ENCODE measurements at regions of chr5 and their contacts with region 1.

Region 1: GRCh38 chr5:139670369-139671095 is 22.4 kb downstream of the CXXC5 start:
- DNase-seq: peak; percentile 36
- H3K4me3 Mint-ChIP-seq: peak overlapping the region; percentile 1
- H3K27ac Mint-ChIP-seq: no peak overlapping the region
- H3K4me1 Mint-ChIP-seq: peaks cover 22% of the 10 kb centered on the region
- H3K27me3 Mint-ChIP-seq: no peaks in the 10 kb centered on the region

Region 2: DNA sequence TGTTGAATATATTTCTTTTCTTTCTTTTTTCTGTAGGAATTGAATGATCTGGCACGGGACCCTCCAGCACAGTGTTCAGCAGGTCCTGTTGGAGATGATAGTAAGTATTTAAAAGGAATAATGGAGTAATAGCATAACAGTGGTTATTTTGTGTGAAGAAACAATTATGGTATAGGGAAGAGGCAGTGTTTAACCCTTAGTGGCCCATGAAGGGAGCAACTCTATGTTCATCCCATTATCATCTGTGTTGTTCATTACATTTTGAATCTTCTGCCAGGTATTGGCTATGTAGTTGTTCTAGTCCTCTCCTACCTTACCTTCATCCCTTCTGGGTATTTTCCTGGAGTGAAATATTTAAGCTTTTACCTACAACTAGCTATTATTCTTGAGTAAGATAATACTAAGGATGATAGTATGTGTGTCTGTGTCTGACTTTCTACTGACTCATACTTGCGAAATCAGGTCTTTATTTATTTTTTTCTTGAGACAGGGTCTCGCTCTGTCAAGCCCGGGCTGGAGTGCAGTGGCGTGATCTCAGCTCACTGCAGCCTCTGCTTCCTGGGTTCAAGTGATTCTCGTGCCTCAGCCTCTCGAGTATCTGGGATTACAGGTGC is 70.1 kb before region 1 on chr5:
- CTCF ChIA-PET with region 1: no interaction called
- POLR2A ChIA-PET with region 1: no interaction called
- intact Hi-C with region 1: no loop called
- DNase-seq: no peak
- H3K4me3 Mint-ChIP-seq: no peak overlapping the region
- H3K27ac Mint-ChIP-seq: no peak overlapping the region
- H3K4me1 Mint-ChIP-seq: peaks cover 19% of the 10 kb centered on the region
- H3K27me3 Mint-ChIP-seq: no peaks in the 10 kb centered on the region

Region 3: DNA sequence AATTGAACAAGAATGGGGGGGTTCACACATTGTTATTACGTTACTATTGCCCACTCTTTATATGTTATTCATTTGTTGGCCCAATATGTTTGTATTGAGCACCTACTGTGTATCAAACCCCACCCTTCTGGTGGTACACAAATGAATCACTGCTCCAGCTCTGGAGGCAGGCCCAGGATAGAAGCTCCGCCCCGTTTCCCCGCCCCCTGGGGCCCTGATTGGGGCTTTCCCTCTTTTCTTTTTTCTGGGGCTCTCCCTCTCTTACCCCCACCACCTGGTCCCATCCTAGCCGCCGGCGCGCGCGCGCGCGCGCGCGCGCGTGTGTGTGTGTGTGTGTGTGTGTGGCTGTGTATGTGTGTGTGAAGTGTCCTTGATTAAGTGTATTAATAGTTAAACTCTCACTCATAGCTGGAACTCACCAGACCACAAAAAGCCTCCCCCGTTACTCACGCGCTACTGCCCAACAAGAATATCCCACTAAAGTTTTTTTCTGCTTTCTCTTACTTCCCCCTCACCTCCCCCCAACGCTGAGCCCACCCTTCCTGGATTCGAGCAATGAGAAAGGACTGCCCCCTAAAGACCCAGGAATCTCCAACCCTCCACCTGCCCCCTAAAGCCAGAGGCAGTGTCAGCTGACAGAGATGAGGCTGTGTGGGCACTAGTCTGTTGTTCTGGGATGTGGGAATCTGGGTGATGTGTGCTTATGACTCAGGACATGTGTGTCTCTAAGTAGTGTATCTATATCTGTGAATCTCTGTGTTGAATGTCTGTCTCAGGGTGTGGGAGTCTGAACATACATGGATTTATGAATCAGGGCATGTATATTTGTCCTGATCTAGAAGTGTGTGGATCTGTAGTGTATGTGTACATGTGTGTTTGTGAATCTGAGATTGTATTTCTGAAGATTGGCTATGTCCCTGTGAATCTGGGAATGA is 18.4 kb before region 1 on chr5:
- CTCF ChIA-PET with region 1: interaction called, 3 read pairs
- POLR2A ChIA-PET with region 1: no interaction called
- intact Hi-C with region 1: loop called (anchors 2 kb)
- DNase-seq: peak; percentile 71
- H3K4me3 Mint-ChIP-seq: no peak overlapping the region
- H3K27ac Mint-ChIP-seq: no peak overlapping the region
- H3K4me1 Mint-ChIP-seq: peaks cover 23% of the 10 kb centered on the region
- H3K27me3 Mint-ChIP-seq: peaks cover 44% of the 10 kb centered on the region

Measured in activated CD4-positive, alpha-beta memory T cell treated with anti-CD3 and anti-CD28 coated beads for 36 hours (primary cell).